ENCODE measurements at regions of chr22 and their contacts with region 1.

Region 1: DNA sequence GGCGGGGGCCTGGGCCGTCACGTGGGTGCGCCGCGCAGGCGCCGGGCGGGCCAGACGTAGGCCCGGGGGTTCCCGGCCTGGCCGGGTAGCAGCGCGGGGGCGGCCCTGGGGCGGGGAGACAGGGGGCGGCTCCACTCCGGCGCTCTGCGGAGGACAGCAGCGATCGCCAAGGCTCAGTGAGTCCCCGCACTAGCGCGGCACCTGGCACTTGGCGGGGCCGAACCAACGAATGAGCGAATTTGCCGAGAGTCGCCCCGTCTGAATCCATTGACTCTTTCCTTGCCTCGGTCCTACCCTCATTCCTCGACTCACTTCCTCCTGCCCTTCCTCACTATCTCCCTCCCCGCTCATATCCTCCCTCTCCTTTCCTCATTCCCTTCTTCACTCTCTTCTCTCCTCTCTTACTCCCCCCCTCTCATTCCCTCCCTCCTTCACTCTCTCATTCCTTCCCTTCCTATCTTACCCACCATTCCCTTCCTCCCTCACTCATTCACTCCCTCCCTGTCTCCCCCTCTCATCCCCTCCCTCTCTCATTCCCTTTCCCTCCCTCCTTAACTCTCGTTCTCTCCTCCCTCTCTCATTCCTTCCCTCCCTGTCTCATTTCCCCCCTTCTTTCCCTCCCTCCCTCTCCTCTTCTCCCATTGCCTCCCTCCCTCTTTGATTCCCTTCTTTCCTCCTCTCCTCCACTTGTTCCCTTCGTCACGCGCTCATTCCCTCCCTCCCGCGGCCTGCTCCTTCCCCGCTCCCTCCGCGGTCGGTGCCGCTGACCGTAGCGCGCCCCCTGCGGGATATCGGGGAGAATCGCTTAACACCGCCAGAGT is 476 bp upstream of the KLHL22 start:
- DNase-seq: peak; percentile 90
- H3K4me3 ChIP-seq: peak overlapping the region; percentile 60
- H3K27ac ChIP-seq: peak overlapping the region; percentile 96
- H3K4me1 ChIP-seq: no peaks in the 10 kb centered on the region
- H3K27me3 ChIP-seq: no peaks in the 10 kb centered on the region
- CTCF ChIP-seq: peak; percentile 82

Region 2: DNA sequence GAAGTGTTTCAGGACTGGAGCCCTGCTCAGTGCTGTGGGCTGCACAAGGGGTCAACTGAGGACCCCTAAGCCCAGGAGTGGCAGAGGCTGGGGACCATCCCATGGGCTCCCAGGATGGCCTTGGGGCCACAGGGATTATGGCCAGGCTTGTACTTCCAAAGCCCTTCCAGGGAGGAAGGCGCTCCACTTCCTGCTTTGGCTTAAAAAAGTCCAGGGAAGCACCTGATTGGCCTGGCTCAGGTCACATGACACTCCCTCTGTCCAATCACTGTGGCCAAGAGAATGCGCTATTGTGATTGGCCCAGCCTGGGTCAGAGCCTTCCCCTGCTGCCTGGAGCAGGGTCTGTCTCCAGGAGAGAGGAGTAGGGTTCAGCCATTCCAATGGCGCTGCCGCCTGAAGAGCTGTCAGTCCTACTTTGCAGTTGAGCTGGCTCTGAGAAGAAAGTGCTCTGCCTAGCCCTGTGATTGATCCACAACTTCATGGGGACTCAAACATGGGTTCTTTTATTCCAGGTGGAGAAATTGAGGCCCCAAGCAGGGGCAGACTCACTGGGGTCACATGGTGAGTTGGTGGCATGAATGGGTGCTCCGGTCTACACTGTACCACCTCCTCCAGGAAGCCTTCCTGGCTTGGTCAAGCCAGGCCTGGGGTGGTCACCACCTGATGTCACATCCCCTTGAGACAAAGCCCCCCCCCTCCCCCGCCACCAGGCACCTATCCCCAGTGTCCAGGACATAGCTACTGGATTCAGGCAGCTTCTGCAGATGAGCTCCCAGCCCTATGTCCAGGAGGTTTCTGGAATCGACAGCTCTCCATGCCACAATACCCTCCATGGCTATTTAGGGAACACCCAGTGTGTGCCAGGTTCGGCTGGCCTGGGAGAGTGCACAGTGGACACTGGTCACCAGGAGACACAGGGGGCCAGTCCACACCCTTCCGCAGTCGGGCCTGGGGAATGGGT is 276.1 kb before region 1 on chr22:
- intact Hi-C with region 1: no loop called
- DNase-seq: no peak
- H3K4me3 ChIP-seq: no peak overlapping the region
- H3K27ac ChIP-seq: no peak overlapping the region
- H3K4me1 ChIP-seq: no peaks in the 10 kb centered on the region
- H3K27me3 ChIP-seq: no peaks in the 10 kb centered on the region
- CTCF ChIP-seq: no peak

Region 3: GRCh38 chr22:20430720-20431510 is 65.2 kb before region 1 on chr22:
- intact Hi-C with region 1: loop called (anchors 10 kb)
- DNase-seq: peak; percentile 40
- H3K4me3 ChIP-seq: peak overlapping the region; percentile 27
- H3K27ac ChIP-seq: no peak overlapping the region
- H3K4me1 ChIP-seq: peaks cover 25% of the 10 kb centered on the region
- H3K27me3 ChIP-seq: peaks cover 80% of the 10 kb centered on the region
- CTCF ChIP-seq: peak; percentile 23

Region 4: GRCh38 chr22:20456064-20456721 is 39.9 kb before region 1 on chr22:
- intact Hi-C with region 1: no loop called
- DNase-seq: peak; percentile 62
- H3K4me3 ChIP-seq: no peak overlapping the region
- H3K27ac ChIP-seq: no peak overlapping the region
- H3K4me1 ChIP-seq: no peaks in the 10 kb centered on the region
- H3K27me3 ChIP-seq: no peaks in the 10 kb centered on the region
- CTCF ChIP-seq: peak; percentile 93

Region 5: DNA sequence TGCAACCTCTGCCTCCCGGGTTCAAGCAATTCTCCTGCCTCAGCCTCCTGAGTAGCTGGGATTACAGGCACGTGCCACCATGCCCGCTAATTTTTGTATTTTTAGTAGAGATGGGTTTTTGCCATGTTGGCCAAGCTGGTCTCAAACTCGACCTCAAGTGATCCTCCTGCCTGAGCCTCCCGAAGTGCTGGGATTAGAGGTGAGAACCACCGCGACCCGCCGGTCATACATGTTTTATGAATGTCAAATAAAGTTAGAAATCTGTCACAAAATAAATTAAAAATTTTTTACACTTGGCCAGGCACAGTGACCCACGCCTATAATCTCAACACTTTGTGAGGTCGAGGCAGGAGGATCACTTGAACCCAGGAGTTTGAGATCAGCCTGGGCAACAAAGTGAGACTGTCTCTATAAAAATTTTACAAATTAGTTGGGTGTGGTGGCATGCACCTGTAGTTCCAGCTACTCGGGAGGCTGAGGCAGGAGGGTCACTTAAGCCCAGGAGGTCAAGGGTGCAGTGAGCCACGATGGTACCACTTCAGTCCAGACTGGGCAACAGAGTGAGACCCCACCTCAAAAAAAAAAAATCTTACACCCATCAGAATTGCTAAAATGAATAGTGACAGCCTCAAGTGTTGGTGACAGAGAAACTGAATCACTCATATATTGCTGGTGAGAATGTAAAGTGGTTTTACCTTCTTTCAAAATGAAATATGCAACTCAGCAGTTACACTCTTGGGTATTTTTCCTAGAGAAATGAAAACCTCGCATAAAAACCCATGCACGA is 66.6 kb after region 1 on chr22:
- intact Hi-C with region 1: loop called (anchors 5 kb)
- DNase-seq: no peak
- H3K4me3 ChIP-seq: no peak overlapping the region
- H3K27ac ChIP-seq: no peak overlapping the region
- H3K4me1 ChIP-seq: peaks cover 6% of the 10 kb centered on the region
- H3K27me3 ChIP-seq: no peaks in the 10 kb centered on the region
- CTCF ChIP-seq: no peak